ENCODE measurements at regions of chr19 and their contacts with region 1.

Region 1: GRCh38 chr19:506404-507285 is 652 bp upstream of the TPGS1 start:
- DNase-seq: peak; percentile 93
- H3K4me3 Mint-ChIP-seq: peak overlapping the region; percentile 88
- H3K27ac Mint-ChIP-seq: peak overlapping the region; percentile 99
- H3K4me1 Mint-ChIP-seq: peaks cover 34% of the 10 kb centered on the region
- H3K27me3 Mint-ChIP-seq: no peaks in the 10 kb centered on the region

Region 2: DNA sequence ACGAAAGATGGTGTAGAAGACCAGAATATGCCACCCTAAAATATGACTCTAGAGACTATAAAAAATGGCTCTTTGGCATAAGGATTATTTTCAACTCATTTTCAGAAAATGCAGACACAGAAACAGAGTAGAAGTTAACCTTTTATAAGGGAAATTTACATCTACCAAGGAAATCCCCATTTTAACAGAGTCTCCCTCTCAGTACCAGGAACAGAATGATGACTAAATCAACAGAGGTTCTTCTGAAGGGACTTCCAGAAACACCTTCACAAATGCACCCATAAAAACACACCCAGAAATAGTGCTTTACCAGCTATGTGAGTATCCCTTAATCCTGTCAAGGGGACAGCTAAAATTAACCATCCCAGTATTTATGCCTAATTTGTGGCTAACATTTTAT is 244.5 kb before region 1 on chr19:
- intact Hi-C with region 1: loop called (anchors 10 kb)
- DNase-seq: no peak
- H3K4me3 Mint-ChIP-seq: no peak overlapping the region
- H3K27ac Mint-ChIP-seq: no peak overlapping the region
- H3K4me1 Mint-ChIP-seq: peaks cover 11% of the 10 kb centered on the region
- H3K27me3 Mint-ChIP-seq: peaks cover 25% of the 10 kb centered on the region

Region 3: DNA sequence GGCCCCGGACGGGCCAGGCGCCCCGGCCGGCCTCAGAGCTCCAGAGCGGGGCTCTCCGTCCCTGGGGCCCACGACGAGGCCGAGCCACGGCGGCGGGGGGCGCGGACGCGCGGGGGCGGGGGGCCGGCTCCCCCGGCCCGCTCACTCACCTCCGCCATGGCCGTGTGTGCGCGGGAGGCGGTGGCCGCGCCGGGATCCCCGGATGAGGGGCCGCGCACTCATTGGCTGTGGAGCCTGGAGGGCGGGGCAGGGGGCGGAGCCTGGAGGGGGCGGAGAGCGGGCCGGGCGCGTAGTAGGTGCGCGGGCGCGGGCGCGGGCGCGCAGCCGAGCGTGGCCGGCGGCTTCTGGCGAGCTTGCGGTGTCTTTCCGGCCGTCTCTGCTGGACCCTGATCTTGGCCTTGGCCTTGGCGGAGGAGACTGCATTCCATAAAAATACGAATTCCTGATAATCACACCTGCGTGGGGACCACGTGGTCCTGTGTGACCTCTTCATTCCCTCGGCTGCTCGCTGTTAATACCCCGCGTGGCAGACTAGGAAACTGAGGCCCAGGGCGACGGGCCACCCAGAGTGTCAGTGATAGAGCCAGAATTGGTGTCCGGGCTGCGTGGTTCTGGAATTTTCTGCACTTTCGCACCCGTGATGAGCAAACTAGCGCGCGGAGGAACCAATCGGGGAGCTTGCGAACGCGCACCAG is 161.9 kb before region 1 on chr19 and contains the start of gene MIER2:
- intact Hi-C with region 1: loop called (anchors 2 kb)
- DNase-seq: peak; percentile 90
- H3K4me3 Mint-ChIP-seq: peak within 1 kb of the TSS; percentile 82
- H3K27ac Mint-ChIP-seq: peak within 1 kb of the TSS; percentile 74
- H3K4me1 Mint-ChIP-seq: peaks cover 38% of the 10 kb centered on the region
- H3K27me3 Mint-ChIP-seq: peaks cover 9% of the 10 kb centered on the region
- total RNA-seq, gene MIER2: 29.2 and 30.5 TPM in 2 replicates

Region 4: GRCh38 chr19:488505-489417 is 17.9 kb before region 1 on chr19:
- intact Hi-C with region 1: loop called (anchors 2 kb)
- DNase-seq: peak; percentile 85
- H3K4me3 Mint-ChIP-seq: peak overlapping the region; percentile 80
- H3K27ac Mint-ChIP-seq: peak overlapping the region; percentile 86
- H3K4me1 Mint-ChIP-seq: peaks cover 4% of the 10 kb centered on the region
- H3K27me3 Mint-ChIP-seq: peaks cover 9% of the 10 kb centered on the region

Region 5: GRCh38 chr19:531009-531752 is 24.5 kb after region 1 on chr19:
- intact Hi-C with region 1: loop called (anchors 1 kb)
- DNase-seq: peak; percentile 90
- H3K4me3 Mint-ChIP-seq: peak overlapping the region; percentile 83
- H3K27ac Mint-ChIP-seq: peak overlapping the region; percentile 88
- H3K4me1 Mint-ChIP-seq: peaks cover 4% of the 10 kb centered on the region
- H3K27me3 Mint-ChIP-seq: peaks cover 1% of the 10 kb centered on the region

Region 6: DNA sequence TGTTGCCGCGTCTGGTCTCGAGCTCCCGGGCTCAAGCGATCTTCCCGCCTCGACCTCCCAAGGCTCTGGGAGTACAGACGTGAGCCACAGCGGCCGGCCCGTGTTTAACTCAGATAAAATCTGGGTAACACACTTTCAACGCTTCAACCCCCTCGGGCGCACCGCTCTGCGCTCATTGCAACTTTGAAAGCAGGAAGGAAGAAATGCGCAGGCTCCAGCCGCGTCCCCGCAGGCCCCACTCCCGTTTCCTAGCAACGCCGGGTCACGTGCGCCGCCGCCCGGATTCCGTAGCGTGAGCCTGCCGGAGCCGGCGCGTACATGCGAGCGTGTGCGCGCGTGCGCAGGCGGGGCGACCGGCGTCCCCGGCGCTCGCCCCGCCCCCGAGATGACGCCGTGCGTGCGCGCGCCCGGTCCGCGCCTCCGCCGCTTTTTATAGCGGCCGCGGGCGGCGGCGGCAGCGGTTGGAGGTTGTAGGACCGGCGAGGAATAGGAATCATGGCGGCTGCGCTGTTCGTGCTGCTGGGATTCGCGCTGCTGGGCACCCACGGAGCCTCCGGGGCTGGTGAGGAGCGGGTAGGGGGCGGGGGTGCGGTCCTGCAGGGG is 65.6 kb after region 1 on chr19 and contains the start of gene BSG:
- intact Hi-C with region 1: loop called (anchors 2 kb)
- DNase-seq: peak; percentile 99
- H3K4me3 Mint-ChIP-seq: peak within 1 kb of the TSS; percentile 86
- H3K27ac Mint-ChIP-seq: peak within 1 kb of the TSS; percentile 94
- H3K4me1 Mint-ChIP-seq: peaks cover 24% of the 10 kb centered on the region
- H3K27me3 Mint-ChIP-seq: no peaks in the 10 kb centered on the region
- total RNA-seq, gene BSG: 300 and 304 TPM in 2 replicates

Region 7: DNA sequence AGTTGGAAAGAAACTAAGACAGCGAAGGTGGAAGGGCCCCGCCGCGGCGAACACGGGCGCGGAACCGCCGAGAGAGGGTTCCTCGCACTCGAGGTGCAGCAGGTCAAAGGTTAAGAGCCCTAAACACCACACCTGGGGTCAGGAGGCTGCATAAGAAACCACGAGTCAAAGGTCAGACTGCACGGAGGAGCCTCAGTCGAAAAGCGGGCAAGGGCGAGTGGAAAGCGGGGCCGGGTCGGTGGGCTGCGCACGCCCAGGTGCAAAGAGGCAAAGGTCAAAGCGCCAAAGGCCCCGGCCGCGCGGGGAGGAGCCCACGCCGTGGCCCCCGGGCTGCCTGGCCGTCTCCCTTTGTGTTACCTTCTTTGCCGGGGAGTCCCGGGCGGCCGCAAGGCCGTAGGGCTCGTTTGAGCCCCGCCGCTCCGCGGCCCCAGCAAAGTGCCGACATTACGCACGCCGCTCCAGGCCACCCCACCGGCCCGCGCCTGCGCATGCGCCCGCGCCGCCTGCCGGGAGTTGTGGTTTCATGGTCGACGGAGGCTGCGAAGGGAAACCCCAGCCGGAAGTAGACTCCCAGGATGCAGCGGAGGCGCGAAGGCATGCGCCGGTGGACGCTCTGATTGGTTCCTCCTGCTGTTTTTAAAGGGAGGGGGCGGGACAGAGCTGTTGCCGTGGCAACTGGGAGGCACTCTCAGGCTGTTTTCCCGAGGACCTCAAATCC is 126.6 kb after region 1 on chr19 and contains the start of gene POLRMT:
- intact Hi-C with region 1: no loop called
- DNase-seq: peak; percentile 95
- H3K4me3 Mint-ChIP-seq: peak within 1 kb of the TSS; percentile 97
- H3K27ac Mint-ChIP-seq: peak within 1 kb of the TSS; percentile 88
- H3K4me1 Mint-ChIP-seq: peaks cover 10% of the 10 kb centered on the region
- H3K27me3 Mint-ChIP-seq: no peaks in the 10 kb centered on the region
- total RNA-seq, gene POLRMT: 90.1 and 94.7 TPM in 2 replicates